ENCODE measurements at regions of chr7 and their contacts with region 1.

Region 1: DNA sequence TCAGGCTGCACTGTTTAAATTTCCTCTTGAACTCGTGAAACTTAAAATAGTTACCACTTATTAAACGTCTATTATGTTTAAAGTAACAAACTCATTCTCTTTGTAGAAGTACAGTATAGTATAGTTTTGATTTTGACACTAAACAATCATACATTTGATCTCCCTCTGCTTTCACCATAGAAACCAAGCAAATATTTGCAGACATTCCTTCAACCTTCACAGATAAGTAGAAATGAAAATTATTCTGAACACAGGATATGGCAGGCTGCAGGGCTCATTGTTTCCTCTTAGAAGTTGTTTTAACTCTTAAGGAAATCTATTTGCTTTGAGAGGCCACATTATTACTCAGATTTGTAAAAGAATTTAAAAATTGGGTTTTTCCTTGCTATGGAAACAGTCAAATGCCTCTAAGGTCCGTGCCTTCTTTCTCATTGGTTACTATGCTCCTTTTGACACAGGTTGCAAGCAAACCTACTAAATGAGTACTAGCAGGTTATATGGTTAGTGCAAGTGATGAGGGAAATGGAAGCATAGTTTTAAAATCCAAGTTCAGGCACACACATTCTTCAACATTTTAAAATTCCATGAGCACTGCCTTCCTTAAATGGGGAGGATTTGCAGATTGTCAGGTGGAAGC is 92.8 kb upstream of the FAM133B start:
- DNase-seq: peak; percentile 44
- H3K4me3 Mint-ChIP-seq: peak overlapping the region; percentile 7
- H3K27ac Mint-ChIP-seq: peak overlapping the region; percentile 90
- H3K4me1 Mint-ChIP-seq: peaks cover 79% of the 10 kb centered on the region
- H3K27me3 Mint-ChIP-seq: no peaks in the 10 kb centered on the region

Region 2: DNA sequence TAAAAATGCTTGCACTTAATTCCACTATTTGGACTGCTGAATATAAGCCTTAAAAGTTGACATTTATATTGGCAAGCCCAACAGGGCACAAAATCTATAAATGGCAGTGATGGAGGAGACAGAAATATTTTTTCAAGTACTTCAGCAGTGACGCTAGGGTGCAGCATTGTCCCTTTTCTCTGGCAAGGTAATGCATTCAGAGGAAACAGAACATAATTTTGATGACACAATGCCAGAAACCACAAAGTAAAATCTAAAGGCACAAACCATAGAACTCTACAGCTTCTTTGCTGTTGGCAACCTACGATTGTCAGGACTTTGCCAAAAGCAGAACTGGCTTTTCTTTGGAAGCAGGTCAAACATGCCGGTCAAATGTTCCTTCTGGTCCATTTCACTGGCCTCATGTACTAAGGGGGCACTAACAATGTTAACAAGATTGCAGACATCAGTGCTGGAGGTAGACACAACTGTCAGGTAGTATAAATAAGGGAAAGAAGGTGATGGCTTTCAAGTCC is 61.9 kb before region 1 on chr7:
- CTCF ChIA-PET with region 1: interaction called, 6 read pairs
- intact Hi-C with region 1: loop called (anchors 1 kb)
- DNase-seq: peak; percentile 93
- H3K4me3 Mint-ChIP-seq: peak overlapping the region; percentile 4
- H3K27ac Mint-ChIP-seq: peak overlapping the region; percentile 80
- H3K4me1 Mint-ChIP-seq: peaks cover 46% of the 10 kb centered on the region
- H3K27me3 Mint-ChIP-seq: no peaks in the 10 kb centered on the region

Region 3: GRCh38 chr7:92648067-92648466 is 35.0 kb before region 1 on chr7:
- CTCF ChIA-PET with region 1: interaction called, 3 read pairs
- intact Hi-C with region 1: loop called (anchors 1 kb)
- DNase-seq: no peak
- H3K4me3 Mint-ChIP-seq: no peak overlapping the region
- H3K27ac Mint-ChIP-seq: peak overlapping the region; percentile 88
- H3K4me1 Mint-ChIP-seq: peaks cover 89% of the 10 kb centered on the region
- H3K27me3 Mint-ChIP-seq: no peaks in the 10 kb centered on the region

Region 4: DNA sequence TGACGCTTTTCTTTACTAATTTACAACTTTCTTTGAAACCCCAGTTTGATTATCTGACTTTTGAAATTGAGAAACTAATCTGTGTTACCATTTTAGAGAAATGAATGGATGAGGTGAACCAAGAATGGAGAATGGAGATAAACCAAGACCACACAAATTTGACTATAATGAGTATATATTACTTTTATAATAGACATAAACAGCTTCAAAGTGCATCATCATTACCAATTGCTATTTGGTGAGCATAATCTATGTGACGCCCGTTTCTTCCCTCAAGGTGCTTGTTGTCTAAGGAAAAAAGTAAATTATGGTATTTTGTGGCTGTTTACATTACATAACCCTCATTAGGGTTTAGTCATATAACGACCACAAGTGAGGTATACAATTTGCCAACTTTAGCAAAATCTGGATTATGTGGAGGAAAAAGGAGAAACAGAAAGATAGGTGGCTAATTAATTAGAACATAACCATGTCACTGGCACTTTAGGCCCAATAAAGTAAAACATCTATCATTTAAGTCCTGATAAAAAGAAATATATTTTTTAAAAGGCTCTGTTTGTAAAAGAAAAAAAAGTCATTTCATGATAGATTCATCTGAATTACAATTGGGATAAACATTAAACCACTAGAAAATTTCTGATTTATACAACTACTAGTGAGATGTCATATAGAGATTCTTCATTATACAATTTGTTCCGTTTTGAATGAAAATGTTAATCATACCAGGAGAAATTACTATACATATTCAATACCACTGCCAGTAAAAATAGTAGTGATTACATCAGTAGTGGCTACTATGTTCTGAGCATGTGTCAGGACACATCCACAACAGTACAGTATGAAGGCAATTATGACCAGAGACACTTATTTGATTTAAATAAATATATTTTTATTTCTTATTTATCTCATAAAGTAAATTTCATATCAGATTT is 25.4 kb after region 1 on chr7:
- CTCF ChIA-PET with region 1: interaction called, 3 read pairs
- intact Hi-C with region 1: loop called (anchors 1 kb)
- DNase-seq: no peak
- H3K4me3 Mint-ChIP-seq: no peak overlapping the region
- H3K27ac Mint-ChIP-seq: peak overlapping the region; percentile 89
- H3K4me1 Mint-ChIP-seq: peaks cover 52% of the 10 kb centered on the region
- H3K27me3 Mint-ChIP-seq: no peaks in the 10 kb centered on the region

Region 5: GRCh38 chr7:92731335-92732063 is 48.5 kb after region 1 on chr7:
- CTCF ChIA-PET with region 1: no interaction called
- intact Hi-C with region 1: loop called (anchors 1 kb)
- DNase-seq: peak; percentile 66
- H3K4me3 Mint-ChIP-seq: peak overlapping the region; percentile 9
- H3K27ac Mint-ChIP-seq: peak overlapping the region; percentile 95
- H3K4me1 Mint-ChIP-seq: peaks cover 64% of the 10 kb centered on the region
- H3K27me3 Mint-ChIP-seq: no peaks in the 10 kb centered on the region

Region 6: DNA sequence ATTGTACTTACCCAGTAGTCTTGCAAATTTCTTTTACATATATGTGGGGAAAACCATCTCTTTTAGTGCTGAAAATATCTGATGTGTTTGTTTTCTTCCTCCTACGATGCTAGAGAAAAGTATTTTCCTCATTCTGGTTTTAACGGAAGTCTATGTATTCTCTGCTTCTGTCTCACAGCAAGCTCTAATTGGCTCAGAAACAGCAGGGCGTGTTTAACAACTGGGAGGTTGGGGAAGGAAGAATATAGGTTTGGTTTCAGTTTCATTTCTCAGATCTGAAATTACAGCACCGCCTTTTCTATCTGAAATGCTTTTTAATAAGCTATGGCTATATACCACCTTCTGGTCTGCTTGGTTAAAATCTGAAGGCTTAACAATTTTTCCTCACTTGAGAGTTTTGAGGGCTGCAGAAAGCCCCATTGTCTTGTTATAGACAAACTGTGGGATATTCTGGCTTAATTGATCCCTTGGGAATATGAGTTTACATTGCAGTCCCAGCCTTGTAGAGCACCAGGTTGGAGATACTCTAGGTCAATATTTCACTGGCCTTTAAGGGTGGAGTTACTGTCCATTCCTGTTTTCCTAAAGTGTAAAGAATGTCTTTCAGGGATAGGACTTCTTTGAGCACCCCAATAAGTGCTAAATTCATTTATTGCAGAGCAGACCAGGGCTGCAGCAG is 435.0 kb after region 1 on chr7 and contains the start of gene SAMD9:
- CTCF ChIA-PET with region 1: no interaction called
- intact Hi-C with region 1: loop called (anchors 5 kb)
- DNase-seq: peak; percentile 70
- H3K4me3 Mint-ChIP-seq: peak within 1 kb of the TSS; percentile 71
- H3K27ac Mint-ChIP-seq: peak within 1 kb of the TSS; percentile 65
- H3K4me1 Mint-ChIP-seq: peaks cover 47% of the 10 kb centered on the region
- H3K27me3 Mint-ChIP-seq: no peaks in the 10 kb centered on the region
- total RNA-seq, gene SAMD9: 2.9 to 3.1 TPM